Calu3 (cell line): ENCODE measurements at regions of chr16 and their contacts with region 1.

Region 1: GRCh38 chr16:75198135-75198600 is 8.8 kb downstream of the CTRB2 start:
- DNase-seq: no peak
- H3K4me3 Mint-ChIP-seq: no peak overlapping the region
- H3K27ac Mint-ChIP-seq: no peak overlapping the region
- H3K4me1 Mint-ChIP-seq: peaks cover 11% of the 10 kb centered on the region
- H3K27me3 Mint-ChIP-seq: peaks cover 46% of the 10 kb centered on the region
- CTCF ChIP-seq: no peak

Region 2: GRCh38 chr16:75089486-75090202 is 108.5 kb before region 1 on chr16:
- CTCF ChIA-PET with region 1: interaction called, 10 read pairs
- intact Hi-C with region 1: no loop called
- DNase-seq: no peak
- H3K4me3 Mint-ChIP-seq: no peak overlapping the region
- H3K27ac Mint-ChIP-seq: no peak overlapping the region
- H3K4me1 Mint-ChIP-seq: peaks cover 24% of the 10 kb centered on the region
- H3K27me3 Mint-ChIP-seq: no peaks in the 10 kb centered on the region
- CTCF ChIP-seq: no peak

Region 3: DNA sequence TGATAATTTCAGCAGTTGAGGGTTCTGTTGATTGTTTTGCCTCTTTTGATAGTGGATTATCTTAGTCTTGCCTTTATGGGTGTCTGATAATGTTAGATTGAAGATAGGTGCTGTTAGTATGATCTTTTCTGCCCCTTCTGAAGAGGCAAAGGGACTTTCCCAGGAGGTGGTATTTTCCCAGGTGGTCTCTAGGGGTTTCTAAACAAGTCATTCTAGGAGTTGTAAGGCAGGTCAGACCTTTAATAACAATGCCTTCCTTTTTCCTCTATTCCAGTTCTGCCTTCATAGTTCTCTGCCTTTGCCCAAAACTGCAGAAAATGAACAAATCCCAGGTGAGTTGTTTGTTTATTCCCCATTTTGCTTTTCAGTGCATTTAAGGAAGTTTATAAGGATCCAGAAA is 45.5 kb before region 1 on chr16:
- CTCF ChIA-PET with region 1: no interaction called
- intact Hi-C with region 1: no loop called
- DNase-seq: no peak
- H3K4me3 Mint-ChIP-seq: no peak overlapping the region
- H3K27ac Mint-ChIP-seq: no peak overlapping the region
- H3K4me1 Mint-ChIP-seq: no peaks in the 10 kb centered on the region
- H3K27me3 Mint-ChIP-seq: no peaks in the 10 kb centered on the region
- CTCF ChIP-seq: no peak

Region 4: GRCh38 chr16:75181630-75182029 is 16.5 kb before region 1 on chr16:
- CTCF ChIA-PET with region 1: no interaction called
- intact Hi-C with region 1: no loop called
- DNase-seq: no peak
- H3K4me3 Mint-ChIP-seq: no peak overlapping the region
- H3K27ac Mint-ChIP-seq: no peak overlapping the region
- H3K4me1 Mint-ChIP-seq: no peaks in the 10 kb centered on the region
- H3K27me3 Mint-ChIP-seq: no peaks in the 10 kb centered on the region
- CTCF ChIP-seq: no peak

Region 5: DNA sequence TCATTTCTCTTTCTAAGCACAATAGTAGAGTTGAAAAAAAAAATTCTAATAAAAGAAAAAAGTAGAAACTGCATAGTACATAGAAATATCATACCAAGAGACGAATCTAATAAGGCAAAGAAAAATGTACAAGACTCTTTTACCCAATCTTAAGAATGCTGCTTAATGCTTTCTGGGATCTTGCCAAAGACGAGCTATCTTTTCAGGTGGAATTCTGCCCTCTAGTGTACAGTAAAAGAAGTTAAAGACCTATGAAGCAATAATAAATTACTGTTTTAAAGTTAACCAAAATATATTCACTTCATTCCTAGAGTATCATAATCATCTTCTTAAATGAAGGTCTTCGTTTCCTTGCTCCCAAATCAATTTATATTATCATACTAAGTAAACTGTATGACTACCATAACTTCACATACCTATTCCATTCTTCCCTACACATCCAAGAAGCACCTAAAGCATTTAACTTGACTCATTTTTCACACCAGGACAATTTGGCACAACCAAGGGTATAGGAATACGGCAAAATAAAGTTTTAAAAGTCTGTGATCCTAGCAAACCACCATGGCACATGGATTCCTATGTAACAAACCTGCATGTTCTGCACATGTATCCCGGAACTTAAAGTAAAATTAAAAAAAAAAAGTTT is 187.5 kb after region 1 on chr16:
- CTCF ChIA-PET with region 1: interaction called, 47 read pairs
- intact Hi-C with region 1: loop called (anchors 1 kb)
- DNase-seq: no peak
- H3K4me3 Mint-ChIP-seq: no peak overlapping the region
- H3K27ac Mint-ChIP-seq: no peak overlapping the region
- H3K4me1 Mint-ChIP-seq: peaks cover 9% of the 10 kb centered on the region
- H3K27me3 Mint-ChIP-seq: no peaks in the 10 kb centered on the region
- CTCF ChIP-seq: peak; percentile 67

Region 6: DNA sequence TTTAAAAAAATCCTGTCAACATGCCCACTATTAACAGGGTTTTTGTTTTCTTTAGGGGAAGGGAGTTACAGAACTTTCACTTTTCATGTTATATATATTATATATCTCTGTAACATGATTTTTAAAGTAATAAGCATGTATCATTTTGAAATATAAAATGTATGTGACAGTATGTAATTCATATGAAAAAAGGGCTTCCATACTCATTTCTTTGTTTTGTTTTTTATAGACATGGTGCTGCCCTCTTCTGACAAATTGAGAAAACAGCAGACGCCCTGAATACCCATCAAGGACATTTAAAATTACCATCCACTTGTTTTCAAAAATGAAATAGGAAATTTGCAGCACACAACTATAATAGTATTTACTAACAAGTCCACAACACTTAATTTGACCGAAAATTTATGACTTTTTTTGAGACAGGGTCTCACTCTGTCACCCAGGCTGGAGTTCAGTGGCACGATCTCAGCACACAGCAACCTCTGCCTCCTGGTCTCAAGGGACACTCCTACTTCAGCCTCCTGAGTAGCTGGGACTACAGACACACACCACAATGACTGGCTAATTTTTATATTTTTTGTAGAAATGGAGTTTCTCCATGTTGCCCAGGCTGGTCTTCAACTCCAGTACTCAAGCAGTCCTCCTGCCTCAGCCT is 204.8 kb after region 1 on chr16:
- CTCF ChIA-PET with region 1: interaction called, 11 read pairs
- intact Hi-C with region 1: loop called (anchors 1 kb)
- DNase-seq: peak; percentile 18
- H3K4me3 Mint-ChIP-seq: no peak overlapping the region
- H3K27ac Mint-ChIP-seq: no peak overlapping the region
- H3K4me1 Mint-ChIP-seq: no peaks in the 10 kb centered on the region
- H3K27me3 Mint-ChIP-seq: no peaks in the 10 kb centered on the region
- CTCF ChIP-seq: peak; percentile 70

Region 7: GRCh38 chr16:75464130-75464918 is 266.2 kb after region 1 on chr16 and contains the start of gene TMEM170A:
- CTCF ChIA-PET with region 1: interaction called, 12 read pairs
- intact Hi-C with region 1: loop called (anchors 5 kb)
- DNase-seq: peak; percentile 100
- H3K4me3 Mint-ChIP-seq: peak within 1 kb of the TSS; percentile 93
- H3K27ac Mint-ChIP-seq: peak within 1 kb of the TSS; percentile 83
- H3K4me1 Mint-ChIP-seq: peaks cover 45% of the 10 kb centered on the region
- H3K27me3 Mint-ChIP-seq: no peaks in the 10 kb centered on the region
- CTCF ChIP-seq: peak; percentile 100
- total RNA-seq, gene TMEM170A: 48.4 and 52.5 TPM in 2 replicates

Region 8: GRCh38 chr16:75764154-75764768 is 566.1 kb after region 1 on chr16:
- CTCF ChIA-PET with region 1: interaction called, 3 read pairs
- intact Hi-C with region 1: loop called (anchors 1 kb)
- DNase-seq: peak; percentile 64
- H3K4me3 Mint-ChIP-seq: no peak overlapping the region
- H3K27ac Mint-ChIP-seq: no peak overlapping the region
- H3K4me1 Mint-ChIP-seq: no peaks in the 10 kb centered on the region
- H3K27me3 Mint-ChIP-seq: peaks cover 46% of the 10 kb centered on the region
- CTCF ChIP-seq: peak; percentile 75